ENCODE measurements at regions of chr4 and their contacts with region 1.

Region 1: DNA sequence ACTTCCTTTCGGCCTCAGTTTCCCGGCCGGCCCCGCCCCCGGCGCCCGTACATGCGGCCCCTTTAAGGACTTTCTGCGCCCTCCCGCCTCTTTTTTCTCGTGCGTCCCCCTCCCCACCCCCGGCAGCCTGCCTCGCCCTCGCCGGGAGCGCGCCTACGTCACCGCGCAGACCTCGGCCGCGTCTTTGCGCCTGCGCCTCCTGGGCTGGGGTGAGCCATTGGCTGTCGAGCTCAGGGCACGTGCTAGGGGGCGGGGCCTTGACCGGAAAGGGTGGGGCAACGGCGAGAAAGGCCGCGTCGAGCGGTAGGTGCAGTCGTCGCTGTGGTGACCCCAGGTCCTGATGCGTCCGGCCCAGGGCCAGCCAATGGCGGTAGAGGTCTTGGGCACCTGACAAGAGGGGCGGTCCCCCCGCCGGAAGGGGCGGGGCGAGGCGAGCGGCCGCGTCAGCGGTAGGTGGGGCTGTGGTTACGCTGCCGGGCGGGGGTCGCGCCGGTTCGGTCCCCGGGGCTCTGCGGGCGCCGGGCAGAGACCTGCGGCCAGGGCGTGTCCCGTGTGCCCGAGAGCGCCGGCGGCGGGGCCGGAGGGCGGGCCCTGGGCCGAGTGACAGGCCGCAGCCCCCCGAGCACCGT is at the start of gene UVSSA:
- DNase-seq: peak; percentile 100
- H3K4me3 Mint-ChIP-seq: peak within 1 kb of the TSS; percentile 92
- H3K27ac Mint-ChIP-seq: peak within 1 kb of the TSS; percentile 92
- H3K4me1 Mint-ChIP-seq: peaks cover 32% of the 10 kb centered on the region
- H3K27me3 Mint-ChIP-seq: peaks cover 2% of the 10 kb centered on the region
- total RNA-seq, gene UVSSA: 25.8 and 27.5 TPM in 2 replicates

Region 2: DNA sequence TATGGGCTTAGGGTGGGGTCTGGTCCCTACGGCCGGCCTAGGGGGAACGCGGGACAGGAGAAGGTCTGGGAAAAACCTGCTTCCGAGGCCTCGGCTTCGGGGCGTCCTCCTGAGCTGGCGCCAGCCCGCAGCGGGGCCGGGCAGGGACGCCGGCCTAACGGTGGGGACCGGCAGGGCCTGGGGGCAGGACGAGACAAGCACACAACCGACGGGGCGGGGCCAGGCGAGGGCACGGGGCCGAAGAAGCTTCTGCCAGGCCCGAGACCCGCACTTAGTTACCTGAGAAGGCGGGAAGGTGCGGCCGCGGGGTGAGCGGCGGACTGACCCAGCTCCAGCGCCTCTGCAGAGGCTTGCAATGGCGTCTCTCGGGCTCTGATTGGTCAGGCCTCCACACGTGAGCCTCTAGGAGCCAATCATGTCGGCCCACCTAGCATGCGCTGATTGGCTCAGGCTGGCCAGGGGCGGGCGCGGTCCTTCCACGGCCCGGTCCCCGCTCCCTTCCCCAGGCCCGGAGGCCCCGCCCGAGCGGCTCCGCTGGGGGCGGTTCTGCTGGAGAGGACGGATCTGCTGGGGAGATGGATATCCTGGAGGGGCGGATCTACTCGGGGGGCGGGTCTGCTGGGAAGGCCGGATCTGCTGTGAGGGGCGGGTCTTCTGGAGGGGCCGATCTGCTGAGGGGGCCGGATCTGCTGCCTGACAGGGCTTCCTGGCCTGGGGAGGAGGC is 565.2 kb before region 1 on chr4:
- intact Hi-C with region 1: loop called (anchors 5 kb)
- DNase-seq: peak; percentile 100
- H3K4me3 Mint-ChIP-seq: peak overlapping the region; percentile 88
- H3K27ac Mint-ChIP-seq: peak overlapping the region; percentile 90
- H3K4me1 Mint-ChIP-seq: peaks cover 37% of the 10 kb centered on the region
- H3K27me3 Mint-ChIP-seq: peaks cover 9% of the 10 kb centered on the region

Region 3: DNA sequence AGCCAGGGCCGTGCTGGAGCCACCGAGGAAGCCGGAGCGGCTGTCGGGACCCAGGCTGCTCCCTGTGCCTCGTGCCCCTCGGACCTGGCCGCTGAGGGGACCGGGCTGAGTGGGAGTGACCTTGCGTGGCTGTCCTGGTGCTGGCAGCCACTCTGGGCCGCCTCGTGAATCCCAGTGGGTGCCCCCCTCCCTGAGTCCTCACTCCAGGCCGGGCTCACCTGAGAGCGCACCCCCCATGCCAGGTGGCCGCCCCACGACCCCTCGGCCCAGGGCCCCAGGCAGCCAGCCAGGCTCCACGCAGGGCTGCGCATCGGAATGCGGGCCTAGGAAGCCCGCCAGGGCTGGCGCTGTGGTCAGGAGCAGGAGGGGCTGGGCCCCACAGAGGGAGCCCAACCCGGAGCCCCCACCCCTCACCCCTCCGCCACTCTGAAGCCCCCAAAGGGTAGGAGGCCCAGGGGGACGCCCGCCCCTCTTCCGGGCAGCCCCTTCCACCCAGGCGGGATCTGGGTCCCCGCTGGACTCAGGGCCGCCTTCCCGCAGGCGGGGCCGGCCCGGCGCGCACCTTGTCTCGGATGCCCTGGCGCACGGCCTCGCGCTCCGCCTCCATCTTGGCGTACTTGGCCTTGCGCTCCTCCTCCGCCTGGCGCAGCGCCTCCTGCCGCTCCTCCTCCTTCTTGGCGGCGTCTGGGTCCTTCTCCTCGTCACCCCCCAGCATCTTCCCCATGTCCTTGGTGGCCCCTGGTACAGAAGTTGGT is 554.8 kb before region 1 on chr4:
- intact Hi-C with region 1: no loop called
- DNase-seq: peak; percentile 46
- H3K4me3 Mint-ChIP-seq: peak overlapping the region; percentile 78
- H3K27ac Mint-ChIP-seq: no peak overlapping the region
- H3K4me1 Mint-ChIP-seq: peaks cover 15% of the 10 kb centered on the region
- H3K27me3 Mint-ChIP-seq: peaks cover 47% of the 10 kb centered on the region

Region 4: GRCh38 chr4:1130316-1131186 is 216.3 kb before region 1 on chr4:
- intact Hi-C with region 1: loop called (anchors 1 kb)
- DNase-seq: peak; percentile 70
- H3K4me3 Mint-ChIP-seq: no peak overlapping the region
- H3K27ac Mint-ChIP-seq: no peak overlapping the region
- H3K4me1 Mint-ChIP-seq: peaks cover 5% of the 10 kb centered on the region
- H3K27me3 Mint-ChIP-seq: peaks cover 14% of the 10 kb centered on the region

Region 5: DNA sequence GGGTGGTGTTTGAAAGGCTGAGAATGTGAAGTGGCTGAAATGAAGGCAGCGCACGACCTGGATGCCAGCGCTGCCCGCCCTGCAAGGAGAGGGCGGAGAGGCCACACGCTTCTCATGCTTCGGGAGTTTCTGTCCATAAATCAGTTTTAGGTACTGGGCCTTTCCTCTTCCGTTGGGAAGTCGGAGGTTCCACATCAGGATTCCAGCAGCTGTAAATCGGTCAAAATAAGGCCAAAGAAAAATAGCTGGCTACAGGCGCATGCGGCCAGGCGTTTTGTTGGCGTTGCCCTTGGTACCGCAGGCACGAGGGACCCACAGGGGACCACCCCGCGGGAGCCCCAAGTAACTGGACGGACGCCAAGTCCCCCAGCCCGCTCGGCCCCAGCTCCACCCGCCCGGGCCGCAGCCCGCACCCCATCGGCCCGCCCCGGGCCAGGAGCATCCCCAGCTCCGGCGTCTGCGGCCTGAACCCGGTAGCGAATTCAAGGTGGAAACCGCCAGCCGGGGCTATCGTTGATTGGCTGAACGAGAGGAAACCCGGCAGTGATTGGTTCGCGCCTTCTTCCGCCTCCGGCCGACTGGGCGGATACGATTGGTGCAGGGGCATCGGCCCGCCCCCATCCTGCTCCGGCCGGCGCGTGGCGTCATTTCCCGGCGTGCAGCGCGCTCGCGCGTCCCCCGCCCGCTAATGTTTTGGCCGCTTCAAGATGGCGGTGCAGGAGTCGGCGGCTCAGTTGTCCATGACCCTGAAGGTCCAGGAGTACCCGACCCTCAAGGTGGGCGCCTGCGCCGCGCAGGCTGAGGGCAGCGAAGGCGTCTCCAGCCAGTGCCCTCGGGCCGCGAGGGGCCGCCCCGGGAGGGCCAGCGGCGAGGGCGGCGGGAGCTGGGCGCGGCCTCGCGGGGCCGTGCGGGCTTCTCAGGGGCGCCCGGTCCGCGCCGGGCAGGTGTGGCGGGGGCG is 57.4 kb before region 1 on chr4 and contains the start of gene MAEA:
- intact Hi-C with region 1: loop called (anchors 1 kb)
- DNase-seq: peak; percentile 98
- H3K4me3 Mint-ChIP-seq: peak within 1 kb of the TSS; percentile 97
- H3K27ac Mint-ChIP-seq: peak within 1 kb of the TSS; percentile 88
- H3K4me1 Mint-ChIP-seq: peaks cover 32% of the 10 kb centered on the region
- H3K27me3 Mint-ChIP-seq: peaks cover 2% of the 10 kb centered on the region
- total RNA-seq, gene MAEA: 67.1 and 68.1 TPM in 2 replicates

Region 6: GRCh38 chr4:1318488-1319213 is 28.2 kb before region 1 on chr4:
- intact Hi-C with region 1: no loop called
- DNase-seq: no peak
- H3K4me3 Mint-ChIP-seq: no peak overlapping the region
- H3K27ac Mint-ChIP-seq: no peak overlapping the region
- H3K4me1 Mint-ChIP-seq: peaks cover 9% of the 10 kb centered on the region
- H3K27me3 Mint-ChIP-seq: no peaks in the 10 kb centered on the region

Region 7: DNA sequence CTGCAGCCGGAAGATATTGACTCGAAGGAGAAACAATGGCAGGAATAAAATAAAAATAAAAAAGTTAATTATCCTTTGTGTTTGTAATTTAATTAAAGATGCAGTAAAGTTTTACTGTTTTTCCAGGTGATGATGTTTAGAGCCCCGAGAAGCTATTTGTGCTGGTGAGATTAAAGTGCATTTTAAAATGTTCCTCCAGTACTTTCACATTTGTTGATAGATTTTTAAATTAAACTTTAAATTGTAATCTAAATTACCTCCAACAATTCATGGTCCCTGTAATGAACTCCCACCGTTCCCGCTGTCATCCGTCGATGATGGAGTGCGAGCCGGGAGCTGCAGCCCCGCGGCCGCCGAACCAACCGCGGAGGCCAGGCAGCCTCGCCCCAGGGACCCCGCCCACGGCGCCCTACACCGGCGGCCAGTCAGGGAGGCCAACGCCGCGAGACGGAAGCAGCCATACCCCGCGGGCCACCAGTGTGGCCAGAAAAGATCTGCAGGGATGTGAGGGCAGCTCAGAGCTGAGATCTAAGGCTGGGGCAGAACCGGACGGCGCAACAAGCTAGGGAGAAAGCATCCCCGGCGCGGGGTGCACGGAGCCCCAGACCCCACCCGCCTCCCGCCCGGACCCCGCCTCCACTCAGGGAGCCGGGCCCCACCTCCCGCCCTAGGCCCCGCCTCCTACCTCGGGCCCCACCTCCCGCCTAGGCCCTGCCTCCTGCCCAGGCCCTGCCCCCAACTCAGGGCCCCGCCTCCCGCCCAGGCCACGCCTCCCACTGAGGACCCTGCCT is 233.2 kb after region 1 on chr4:
- intact Hi-C with region 1: loop called (anchors 2 kb)
- DNase-seq: peak; percentile 73
- H3K4me3 Mint-ChIP-seq: peak overlapping the region; percentile 49
- H3K27ac Mint-ChIP-seq: no peak overlapping the region
- H3K4me1 Mint-ChIP-seq: no peaks in the 10 kb centered on the region
- H3K27me3 Mint-ChIP-seq: peaks cover 2% of the 10 kb centered on the region

Region 8: GRCh38 chr4:1856042-1856788 is 509.3 kb after region 1 on chr4 and contains the start of gene LETM1:
- intact Hi-C with region 1: loop called (anchors 10 kb)
- DNase-seq: peak; percentile 95
- H3K4me3 Mint-ChIP-seq: peak within 1 kb of the TSS; percentile 87
- H3K27ac Mint-ChIP-seq: peak within 1 kb of the TSS; percentile 68
- H3K4me1 Mint-ChIP-seq: peaks cover 34% of the 10 kb centered on the region
- H3K27me3 Mint-ChIP-seq: no peaks in the 10 kb centered on the region
- total RNA-seq, gene LETM1: 93.9 and 101 TPM in 2 replicates